PC-9 (cell line): ENCODE measurements at regions of chr1 and their contacts with region 1.

Region 1: GRCh38 chr1:193868425-193868824 is 682.0 kb upstream of the B3GALT2 start:
- DNase-seq: no peak
- H3K4me3 ChIP-seq: no peak overlapping the region
- H3K27ac ChIP-seq: no peak overlapping the region
- H3K4me1 ChIP-seq: no peaks in the 10 kb centered on the region
- H3K27me3 ChIP-seq: no peaks in the 10 kb centered on the region
- CTCF ChIP-seq: no peak

Region 2: DNA sequence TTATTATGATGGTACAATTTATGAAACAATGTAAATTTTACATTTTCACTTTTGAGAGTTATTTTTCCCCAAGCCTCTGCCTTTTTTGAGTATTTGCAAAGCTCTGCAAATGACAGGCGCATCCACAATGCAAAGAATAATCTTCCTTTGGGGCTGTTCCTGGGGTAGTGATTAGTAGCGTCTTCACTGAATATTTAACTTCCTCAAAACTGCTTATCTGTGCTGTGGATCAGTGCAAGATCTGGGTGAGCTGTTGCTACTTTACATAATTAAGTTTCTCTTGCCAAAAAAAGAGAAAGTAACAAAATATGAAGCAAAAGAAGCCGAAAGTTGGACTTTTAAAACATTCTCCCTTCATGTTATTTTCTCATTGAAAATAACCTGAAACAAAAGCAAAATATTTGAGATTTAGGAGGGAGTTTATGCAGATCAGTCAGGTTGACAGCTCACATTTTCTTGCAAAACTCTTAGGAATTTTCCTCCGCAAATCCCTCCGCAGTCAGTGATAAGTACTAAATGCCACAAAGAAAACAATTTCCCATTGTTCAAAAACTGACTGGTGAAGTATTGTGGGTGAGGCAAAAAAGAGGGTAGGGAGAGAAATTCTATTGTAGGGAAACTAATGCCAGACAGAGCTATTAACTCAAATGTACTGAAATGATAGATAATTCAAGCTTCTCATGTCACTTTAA is 405.6 kb before region 1 on chr1:
- CTCF ChIA-PET with region 1: interaction called, 14 read pairs
- POLR2A ChIA-PET with region 1: no interaction called
- intact Hi-C with region 1: no loop called
- DNase-seq: peak in 1 of 2 experiments; percentile 3
- H3K4me3 ChIP-seq: no peak overlapping the region
- H3K27ac ChIP-seq: no peak overlapping the region
- H3K4me1 ChIP-seq: no peaks in the 10 kb centered on the region
- H3K27me3 ChIP-seq: no peaks in the 10 kb centered on the region
- CTCF ChIP-seq: no peak